GM12878 (cell line): ENCODE measurements at regions of chr2 and their contacts with region 1.

Region 1: DNA sequence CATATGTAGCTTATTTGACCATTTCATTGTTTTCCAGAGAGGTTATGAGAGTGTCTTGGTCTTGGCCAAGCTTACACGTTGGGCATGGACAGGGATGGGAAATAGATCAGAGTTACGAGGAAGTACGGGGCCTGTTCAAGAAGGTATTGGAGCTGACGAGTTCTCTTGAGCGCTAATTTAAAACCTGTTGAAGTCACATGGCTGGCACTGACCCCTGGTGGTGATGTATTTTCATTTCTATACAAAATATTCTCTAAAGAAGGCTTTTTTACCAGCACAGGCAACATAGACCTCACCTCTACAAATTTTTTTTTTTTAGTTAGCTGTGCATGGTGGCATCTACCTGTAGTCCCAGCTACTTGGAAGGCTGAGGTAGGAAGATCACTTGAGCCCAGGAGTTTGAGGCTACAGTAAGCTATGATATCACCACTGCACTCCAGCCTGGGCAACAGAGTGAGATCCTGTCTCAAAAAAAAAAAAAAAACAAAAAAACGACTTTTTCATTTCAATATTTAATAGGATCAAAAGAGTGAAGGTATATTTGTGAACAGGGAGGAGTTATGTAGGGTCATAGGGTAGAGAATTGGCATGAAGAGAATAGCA is 19.6 kb downstream of the UGP2 start:
- DNase-seq: no peak
- ATAC-seq: peak; percentile 81
- H3K4me3 ChIP-seq: no peak overlapping the region
- H3K27ac ChIP-seq: no peak overlapping the region
- H3K4me1 ChIP-seq: no peaks in the 10 kb centered on the region
- H3K27me3 ChIP-seq: no peaks in the 10 kb centered on the region
- CTCF ChIP-seq: peak; percentile 42 to 61 (median 49); a peak in 5 of 6 replicates
- EP300 ChIP-seq: no peak
- POLR2A ChIP-seq: no peak
- RAD21 ChIP-seq: peak; percentile 70

Region 2: GRCh38 chr2:63588385-63589147 is 272.8 kb before region 1 on chr2 and contains the starts of genes MDH1 and WDPCP:
- CTCF ChIA-PET with region 1: no interaction called
- POLR2A ChIA-PET with region 1: interaction called, 4 read pairs
- RAD21 ChIA-PET with region 1: no interaction called
- SMC1A ChIA-PET with region 1: interaction called, 4 read pairs
- in situ Hi-C with region 1: no loop called
- intact Hi-C with region 1: loop called (anchors 5 kb)
- DNase-seq: peak; percentile 99
- ATAC-seq: peak; percentile 91
- H3K4me3 ChIP-seq: peak within 1 kb of the TSS; percentile 99
- H3K27ac ChIP-seq: peak within 1 kb of the TSS; percentile 93
- H3K4me1 ChIP-seq: peaks cover 6% of the 10 kb centered on the region
- H3K27me3 ChIP-seq: no peaks in the 10 kb centered on the region
- CTCF ChIP-seq: no peak
- EP300 ChIP-seq: peak in 1 of 2 experiments; percentile 37; a peak in 1 of 4 replicates
- POLR2A ChIP-seq: peak; percentile 89
- RAD21 ChIP-seq: no peak
- polyA plus RNA-seq, gene MDH1: 1,221 to 1,581 TPM
- polyA plus RNA-seq, gene WDPCP: 2.1 to 2.7 TPM

Region 3: DNA sequence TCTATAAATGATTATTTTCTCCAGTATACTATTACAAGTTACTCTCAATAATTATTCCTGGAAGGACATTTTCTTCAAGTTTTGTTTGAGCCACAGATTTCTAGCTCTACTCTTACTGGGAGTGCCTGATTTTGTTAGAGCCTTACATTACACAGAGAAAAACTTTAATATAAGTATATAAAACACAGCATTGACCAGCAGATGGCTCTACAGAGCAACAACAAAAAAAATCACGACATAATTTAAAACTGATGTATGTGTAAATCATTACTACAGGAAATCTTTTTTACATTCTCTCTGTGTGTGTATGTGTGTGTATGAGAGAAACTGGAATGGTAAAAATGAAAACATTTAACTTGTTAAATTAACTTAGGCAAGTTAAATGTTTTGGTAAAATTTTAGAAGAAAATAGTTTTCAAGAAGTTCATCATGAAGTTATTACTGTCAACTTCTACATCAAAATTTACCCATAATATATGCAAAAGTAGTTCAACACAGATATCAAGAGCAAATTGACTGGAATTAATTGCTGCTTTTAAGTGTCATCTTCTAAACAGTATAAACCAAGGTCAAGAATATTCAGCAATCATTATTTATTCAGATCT is 169.2 kb before region 1 on chr2:
- CTCF ChIA-PET with region 1: interaction called, 170 read pairs
- POLR2A ChIA-PET with region 1: no interaction called
- RAD21 ChIA-PET with region 1: interaction called, 21 read pairs
- SMC1A ChIA-PET with region 1: interaction called, 11 read pairs
- in situ Hi-C with region 1: loop called (anchors 5 kb)
- intact Hi-C with region 1: loop called (anchors 1 kb)
- DNase-seq: no peak
- ATAC-seq: peak; percentile 69
- H3K4me3 ChIP-seq: no peak overlapping the region
- H3K27ac ChIP-seq: no peak overlapping the region
- H3K4me1 ChIP-seq: no peaks in the 10 kb centered on the region
- H3K27me3 ChIP-seq: no peaks in the 10 kb centered on the region
- CTCF ChIP-seq: peak; percentile 38 to 48 (median 42); a peak in 3 of 6 replicates
- EP300 ChIP-seq: no peak
- POLR2A ChIP-seq: no peak
- RAD21 ChIP-seq: peak; percentile 59

Region 4: GRCh38 chr2:63841254-63842022 is 19.9 kb before region 1 on chr2 and contains the start of gene UGP2:
- CTCF ChIA-PET with region 1: interaction called, 36 read pairs
- POLR2A ChIA-PET with region 1: interaction called, 4 read pairs
- RAD21 ChIA-PET with region 1: interaction called, 9 read pairs
- SMC1A ChIA-PET with region 1: interaction called, 90 read pairs
- in situ Hi-C with region 1: no loop called
- intact Hi-C with region 1: no loop called
- DNase-seq: peak; percentile 62
- ATAC-seq: peak; percentile 85
- H3K4me3 ChIP-seq: peak within 1 kb of the TSS; percentile 73
- H3K27ac ChIP-seq: peak within 1 kb of the TSS; percentile 98
- H3K4me1 ChIP-seq: no peaks in the 10 kb centered on the region
- H3K27me3 ChIP-seq: no peaks in the 10 kb centered on the region
- CTCF ChIP-seq: peak in 2 of 3 experiments; percentile 9 to 27; a peak in 1 of 6 replicates
- EP300 ChIP-seq: 0 out of 4 replicates have a peak, but pooled peaks of 1 of the 2 experiments have one; percentile 20
- POLR2A ChIP-seq: peak; percentile 77
- RAD21 ChIP-seq: no peak
- polyA plus RNA-seq, gene UGP2: 81.0 to 89.0 TPM

Region 5: DNA sequence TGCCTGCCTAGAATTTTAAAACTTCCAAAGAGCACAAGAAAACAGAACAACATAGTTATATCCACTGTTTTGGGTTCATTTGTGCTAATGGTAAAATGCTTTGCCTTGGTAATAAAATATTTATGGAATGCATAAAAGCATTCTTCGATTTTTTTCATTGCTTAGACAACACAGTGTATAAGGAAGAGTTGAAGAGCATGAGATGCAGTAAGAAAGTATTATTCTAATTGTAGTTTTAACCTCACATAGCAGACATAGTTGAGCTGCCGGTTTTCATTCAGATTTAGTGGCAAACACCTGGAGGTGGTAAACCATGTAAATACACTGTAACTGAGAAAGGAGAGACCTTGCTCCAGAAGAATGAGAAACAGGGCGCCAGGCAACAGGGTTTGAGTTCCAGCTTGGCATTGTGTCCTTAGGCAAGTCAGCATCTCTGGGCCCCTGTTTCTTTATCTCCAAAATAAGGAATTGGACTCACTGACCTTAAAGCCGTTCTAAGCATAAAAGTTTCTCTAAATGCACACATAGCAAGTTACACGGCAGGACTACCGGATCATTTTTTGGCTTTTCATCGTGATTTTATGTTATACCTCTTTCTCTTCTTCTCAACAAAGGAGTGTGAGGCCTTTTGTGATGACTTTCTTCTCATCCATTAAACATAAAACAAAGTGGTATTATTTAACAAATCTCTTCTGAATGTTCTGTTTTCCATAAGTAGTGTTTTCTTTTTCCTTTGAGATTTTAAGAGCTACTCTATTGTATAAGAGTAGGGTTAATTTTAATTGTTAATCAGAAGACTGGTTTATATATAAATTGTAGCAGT is 11.7 kb before region 1 on chr2:
- CTCF ChIA-PET with region 1: interaction called, 36 read pairs
- POLR2A ChIA-PET with region 1: interaction called, 9 read pairs
- RAD21 ChIA-PET with region 1: interaction called, 9 read pairs
- SMC1A ChIA-PET with region 1: interaction called, 90 read pairs
- in situ Hi-C with region 1: no loop called
- intact Hi-C with region 1: no loop called
- DNase-seq: no peak
- ATAC-seq: no peak
- H3K4me3 ChIP-seq: no peak overlapping the region
- H3K27ac ChIP-seq: no peak overlapping the region
- H3K4me1 ChIP-seq: no peaks in the 10 kb centered on the region
- H3K27me3 ChIP-seq: no peaks in the 10 kb centered on the region
- CTCF ChIP-seq: no peak
- EP300 ChIP-seq: no peak
- POLR2A ChIP-seq: no peak
- RAD21 ChIP-seq: no peak

Region 6: GRCh38 chr2:63875131-63875527 is 13.8 kb after region 1 on chr2:
- CTCF ChIA-PET with region 1: interaction called, 26 read pairs
- POLR2A ChIA-PET with region 1: interaction called, 3 read pairs
- RAD21 ChIA-PET with region 1: interaction called, 3 read pairs
- SMC1A ChIA-PET with region 1: interaction called, 6 read pairs
- in situ Hi-C with region 1: no loop called
- intact Hi-C with region 1: no loop called
- DNase-seq: no peak
- ATAC-seq: no peak
- H3K4me3 ChIP-seq: no peak overlapping the region
- H3K27ac ChIP-seq: no peak overlapping the region
- H3K4me1 ChIP-seq: no peaks in the 10 kb centered on the region
- H3K27me3 ChIP-seq: no peaks in the 10 kb centered on the region
- CTCF ChIP-seq: no peak
- EP300 ChIP-seq: no peak
- POLR2A ChIP-seq: no peak
- RAD21 ChIP-seq: no peak

Region 7: GRCh38 chr2:63903003-63903402 is 41.7 kb after region 1 on chr2:
- CTCF ChIA-PET with region 1: interaction called, 10 read pairs
- POLR2A ChIA-PET with region 1: no interaction called
- RAD21 ChIA-PET with region 1: interaction called, 5 read pairs
- SMC1A ChIA-PET with region 1: interaction called, 5 read pairs
- in situ Hi-C with region 1: no loop called
- intact Hi-C with region 1: no loop called
- DNase-seq: peak; percentile 35
- ATAC-seq: peak; percentile 65
- H3K4me3 ChIP-seq: no peak overlapping the region
- H3K27ac ChIP-seq: no peak overlapping the region
- H3K4me1 ChIP-seq: no peaks in the 10 kb centered on the region
- H3K27me3 ChIP-seq: no peaks in the 10 kb centered on the region
- CTCF ChIP-seq: no peak
- EP300 ChIP-seq: no peak
- POLR2A ChIP-seq: no peak
- RAD21 ChIP-seq: no peak